Testis (tissue), 5 donors: ENCODE measurements at regions of chr2 and their contacts with region 1.

Region 1: DNA sequence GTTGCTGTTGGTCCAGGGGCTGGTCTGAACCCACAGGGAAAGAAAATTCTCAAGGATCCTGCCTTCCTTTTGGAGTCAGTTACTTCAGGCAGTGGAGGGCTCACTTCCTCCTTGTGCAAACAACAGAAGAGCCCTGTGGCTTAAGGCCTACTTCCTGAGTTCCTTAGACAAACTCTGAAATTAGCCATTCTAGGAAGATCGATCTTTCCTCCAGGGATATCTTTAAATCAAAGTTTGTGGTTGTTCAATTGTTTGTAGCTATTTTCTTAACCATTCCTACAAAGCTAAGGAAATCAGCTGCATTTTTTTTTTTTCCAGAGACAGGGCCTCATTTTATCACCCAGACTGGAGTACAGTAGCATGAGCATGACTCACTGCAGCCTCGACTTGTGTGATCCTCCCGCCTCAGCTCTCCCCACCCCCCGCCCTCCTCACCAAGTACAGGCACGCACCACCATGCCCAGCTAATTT is 156.0 kb downstream of the TANC1 start:
- DNase-seq: peak; percentile 22
- H3K4me3 ChIP-seq: no peak overlapping the region
- H3K27ac ChIP-seq: no peak overlapping the region
- H3K4me1 ChIP-seq: no peaks in the 10 kb centered on the region
- H3K27me3 ChIP-seq: no peaks in the 10 kb centered on the region
- CTCF ChIP-seq: no peak
- POLR2A ChIP-seq: no peak

Region 2: GRCh38 chr2:158903711-158904443 is 220.6 kb before region 1 on chr2:
- intact Hi-C with region 1: loop called (anchors 10 kb)
- DNase-seq: no peak
- H3K4me3 ChIP-seq: no peak overlapping the region
- H3K27ac ChIP-seq: no peak overlapping the region
- H3K4me1 ChIP-seq: no peaks in the 10 kb centered on the region
- H3K27me3 ChIP-seq: no peaks in the 10 kb centered on the region
- CTCF ChIP-seq: no peak
- POLR2A ChIP-seq: no peak

Region 3: DNA sequence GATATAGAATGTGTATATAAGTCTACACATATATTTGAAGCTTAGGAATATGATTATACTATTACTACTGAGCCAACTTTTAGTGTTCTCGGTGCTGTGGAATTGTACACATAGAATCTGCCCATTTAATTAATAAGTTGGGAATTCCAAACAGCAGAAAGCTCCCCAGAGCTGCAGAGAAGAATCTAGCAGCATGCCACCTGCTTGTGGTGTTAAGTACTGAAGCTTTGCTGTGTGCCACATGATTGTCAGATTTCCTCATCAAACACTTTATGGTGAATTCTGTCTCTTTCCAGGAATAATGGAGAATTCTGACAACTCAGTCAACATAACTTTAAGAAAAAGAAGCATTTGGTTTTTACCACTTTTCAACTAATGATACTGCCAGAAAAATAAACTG is 44.2 kb after region 1 on chr2:
- intact Hi-C with region 1: no loop called
- DNase-seq: no peak
- H3K4me3 ChIP-seq: no peak overlapping the region
- H3K27ac ChIP-seq: no peak overlapping the region
- H3K4me1 ChIP-seq: no peaks in the 10 kb centered on the region
- H3K27me3 ChIP-seq: no peaks in the 10 kb centered on the region
- CTCF ChIP-seq: no peak
- POLR2A ChIP-seq: no peak